ENCODE measurements at regions of chr19 and their contacts with region 1.

Region 1: DNA sequence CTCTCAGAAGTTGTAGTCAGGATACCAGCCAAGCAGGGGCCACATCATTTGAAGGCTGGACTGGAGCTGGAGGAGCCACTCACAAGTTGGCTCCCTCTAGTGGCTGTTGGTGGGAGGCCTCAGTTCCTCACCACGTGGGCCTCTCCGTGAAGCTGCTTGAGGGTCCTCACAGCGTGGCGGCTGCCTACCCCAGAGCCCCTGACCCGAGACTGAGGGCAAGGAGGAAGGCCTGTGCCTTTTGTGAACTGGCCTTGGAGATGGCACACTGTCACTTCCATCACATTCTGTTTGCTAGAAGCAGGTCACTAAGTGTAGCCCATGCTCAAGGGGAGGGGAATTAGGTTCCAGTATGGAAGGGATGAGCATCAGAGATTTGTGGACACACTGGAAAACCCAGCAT is 14.6 kb downstream of the GNA11 start:
- DNase-seq: peak in 1 of 2 donors; percentile 76
- ATAC-seq: no peak
- H3K4me3 ChIP-seq: no peak overlapping the region
- H3K27ac ChIP-seq: no peak overlapping the region
- H3K4me1 ChIP-seq: no peaks in the 10 kb centered on the region
- H3K27me3 ChIP-seq: no peaks in the 10 kb centered on the region

Region 2: DNA sequence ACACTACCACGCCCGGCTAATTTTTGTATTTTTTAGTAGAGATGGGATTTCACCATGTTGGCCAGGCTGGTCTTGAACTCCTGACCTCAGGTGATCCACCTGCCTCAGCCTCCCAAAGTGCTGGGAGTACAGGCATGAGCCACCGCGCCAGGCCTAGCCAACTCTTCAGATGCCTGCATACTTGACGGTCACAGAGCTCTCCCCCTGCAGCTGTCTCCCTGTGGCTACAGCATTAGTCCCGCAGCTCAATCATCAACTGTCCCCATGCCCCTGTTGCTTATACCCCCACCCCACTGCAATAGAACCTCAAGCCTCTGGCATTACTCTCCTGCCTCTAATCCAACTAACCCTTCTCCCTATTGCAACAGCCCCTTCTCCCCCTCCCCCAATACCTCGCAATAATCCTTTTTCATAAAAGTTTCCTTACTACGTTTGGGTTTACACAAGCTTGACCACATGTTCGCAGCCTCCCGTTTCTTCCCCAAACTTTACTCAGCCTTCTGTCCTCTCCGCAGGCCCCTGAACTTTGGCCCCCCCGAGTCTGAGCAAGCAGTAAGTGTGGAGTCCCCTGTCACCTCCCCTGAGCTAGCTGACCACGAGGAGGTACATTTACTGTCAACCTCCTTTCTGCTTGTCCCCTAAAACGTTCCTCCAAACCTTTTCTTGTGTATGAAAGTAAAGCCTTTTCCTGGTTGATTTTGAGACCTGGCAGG is 165.7 kb before region 1 on chr19:
- intact Hi-C with region 1: no loop called
- DNase-seq: no peak
- ATAC-seq: no peak
- H3K4me3 ChIP-seq: no peak overlapping the region
- H3K27ac ChIP-seq: no peak overlapping the region
- H3K4me1 ChIP-seq: no peaks in the 10 kb centered on the region
- H3K27me3 ChIP-seq: no peaks in the 10 kb centered on the region

Region 3: DNA sequence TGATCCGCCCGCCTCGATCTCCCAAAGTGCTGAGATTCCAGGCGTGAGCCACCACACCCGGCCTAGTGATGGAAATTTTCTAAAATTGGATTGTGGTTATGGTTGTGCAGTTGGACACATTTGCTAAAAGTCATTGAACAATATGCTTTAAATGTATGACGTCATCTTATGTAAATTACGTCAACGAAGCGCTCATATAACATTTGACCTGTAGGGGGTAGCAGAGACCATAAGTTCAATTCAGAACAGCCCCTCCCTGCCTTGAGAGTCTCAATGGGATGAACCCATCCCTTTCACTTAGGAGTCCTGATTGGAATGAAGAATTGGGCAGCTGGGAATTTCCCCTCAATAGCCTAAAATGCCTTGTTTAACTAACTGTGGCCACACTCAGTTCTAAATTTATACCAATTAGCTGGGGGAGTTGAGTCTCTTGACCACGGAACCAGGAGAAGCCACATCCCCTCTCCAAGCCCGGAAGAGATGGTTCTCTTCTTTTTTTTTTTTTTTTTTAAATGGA is 146.7 kb before region 1 on chr19:
- intact Hi-C with region 1: loop called (anchors 2 to 5 kb)
- DNase-seq: no peak
- ATAC-seq: peak; percentile 91
- H3K4me3 ChIP-seq: no peak overlapping the region
- H3K27ac ChIP-seq: no peak overlapping the region
- H3K4me1 ChIP-seq: no peaks in the 10 kb centered on the region
- H3K27me3 ChIP-seq: no peaks in the 10 kb centered on the region

Region 4: DNA sequence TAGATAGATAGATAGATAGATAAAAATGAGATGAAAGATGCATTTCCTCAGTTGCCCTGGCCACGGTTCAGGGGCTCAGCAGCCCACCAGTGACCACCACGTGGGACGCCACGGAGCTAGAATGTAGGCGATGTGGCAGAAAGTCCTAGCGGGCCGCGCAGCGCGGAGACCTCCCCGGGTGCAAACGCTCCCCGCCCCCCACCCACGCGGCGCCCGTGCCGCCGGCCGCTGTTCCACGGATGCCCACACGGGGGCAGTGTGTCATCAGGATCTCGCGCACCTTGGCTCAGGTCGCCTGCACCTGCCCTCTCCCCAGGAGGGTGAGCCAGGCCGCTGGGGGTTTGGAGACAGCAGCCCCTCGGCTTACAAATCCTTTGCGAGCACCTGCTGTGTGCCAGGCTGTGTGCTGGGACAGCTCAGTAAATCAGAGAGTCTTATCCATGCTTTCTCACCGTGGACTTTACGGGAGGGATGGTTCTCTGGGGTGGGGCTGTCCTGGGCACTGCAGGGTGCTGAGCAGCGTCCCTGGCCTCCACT is 32.8 kb before region 1 on chr19:
- intact Hi-C with region 1: loop called in 1 of 2 experiments (anchors 2 kb)
- DNase-seq: peak in 1 of 2 donors; percentile 92
- ATAC-seq: peak; percentile 89
- H3K4me3 ChIP-seq: no peak overlapping the region
- H3K27ac ChIP-seq: no peak overlapping the region
- H3K4me1 ChIP-seq: no peaks in the 10 kb centered on the region
- H3K27me3 ChIP-seq: no peaks in the 10 kb centered on the region

Region 5: DNA sequence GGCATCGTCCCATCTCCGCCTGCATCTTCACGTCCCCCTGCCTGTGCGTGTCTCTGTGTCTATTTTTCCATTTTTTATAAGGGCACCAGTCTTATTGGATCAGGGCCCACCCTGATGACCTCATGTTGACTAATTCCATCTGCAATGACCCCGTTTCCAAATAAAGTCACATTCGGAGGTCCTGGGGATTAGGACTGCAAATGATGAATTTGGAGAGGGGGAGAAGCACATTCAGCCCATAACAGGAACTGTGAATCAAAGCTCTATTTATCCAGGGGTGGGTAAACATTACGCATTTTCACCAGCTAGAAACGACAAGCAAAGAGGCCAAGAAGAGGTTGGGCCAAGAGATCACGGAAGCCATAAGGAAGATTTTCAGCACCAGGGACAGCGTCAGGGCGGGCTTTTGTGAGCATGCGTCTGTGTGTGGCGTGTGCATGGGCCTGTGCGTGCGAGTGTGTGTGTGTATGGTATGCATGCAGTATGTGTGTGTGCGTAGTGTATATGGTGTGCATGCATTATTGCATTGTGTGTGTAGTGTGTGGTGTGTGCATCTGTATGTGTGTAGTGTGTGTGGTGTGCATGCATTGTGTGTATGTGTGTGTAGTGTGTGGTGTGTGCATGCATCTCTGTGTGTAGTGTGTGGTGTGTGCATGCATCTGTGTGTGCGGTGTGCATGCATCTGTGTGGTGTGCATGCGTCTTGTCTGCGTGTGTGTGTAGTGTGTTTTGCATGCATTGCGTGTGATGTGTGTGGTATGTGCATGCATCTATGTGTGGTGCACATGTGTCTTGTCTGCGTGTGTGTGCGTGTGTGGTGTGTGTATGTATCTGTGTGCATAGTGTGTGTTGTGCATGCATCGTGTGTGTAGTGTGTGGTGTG is 135.3 kb after region 1 on chr19:
- intact Hi-C with region 1: no loop called
- DNase-seq: no peak
- ATAC-seq: no peak
- H3K4me3 ChIP-seq: no peak overlapping the region
- H3K27ac ChIP-seq: no peak overlapping the region
- H3K4me1 ChIP-seq: no peaks in the 10 kb centered on the region
- H3K27me3 ChIP-seq: no peaks in the 10 kb centered on the region